ENCODE measurements at regions of chr2 and their contacts with region 1.

Region 1: GRCh38 chr2:85813982-85814801 is 60.4 kb downstream of the ATOH8 start:
- DNase-seq: peak; percentile 92
- ATAC-seq: peak; percentile 97
- H3K4me3 Mint-ChIP-seq: no peak overlapping the region
- H3K27ac Mint-ChIP-seq: no peak overlapping the region
- H3K4me1 Mint-ChIP-seq: no peaks in the 10 kb centered on the region
- H3K27me3 Mint-ChIP-seq: peaks cover 3% of the 10 kb centered on the region

Region 2: GRCh38 chr2:85635636-85636035 is 178.6 kb before region 1 on chr2:
- CTCF ChIA-PET with region 1: interaction called, 5 read pairs
- POLR2A ChIA-PET with region 1: no interaction called
- intact Hi-C with region 1: loop called in 1 of 2 experiments (anchors 2 kb)
- DNase-seq: no peak
- ATAC-seq: no peak
- H3K4me3 Mint-ChIP-seq: no peak overlapping the region
- H3K27ac Mint-ChIP-seq: no peak overlapping the region
- H3K4me1 Mint-ChIP-seq: peaks cover 10% of the 10 kb centered on the region
- H3K27me3 Mint-ChIP-seq: no peaks in the 10 kb centered on the region

Region 3: GRCh38 chr2:85678794-85679672 is 135.2 kb before region 1 on chr2:
- CTCF ChIA-PET with region 1: interaction called, 4 read pairs
- POLR2A ChIA-PET with region 1: no interaction called
- intact Hi-C with region 1: loop called (anchors 1 to 5 kb)
- DNase-seq: peak; percentile 85
- ATAC-seq: peak; percentile 96
- H3K4me3 Mint-ChIP-seq: no peak overlapping the region
- H3K27ac Mint-ChIP-seq: no peak overlapping the region
- H3K4me1 Mint-ChIP-seq: no peaks in the 10 kb centered on the region
- H3K27me3 Mint-ChIP-seq: peaks cover 2% of the 10 kb centered on the region

Region 4: DNA sequence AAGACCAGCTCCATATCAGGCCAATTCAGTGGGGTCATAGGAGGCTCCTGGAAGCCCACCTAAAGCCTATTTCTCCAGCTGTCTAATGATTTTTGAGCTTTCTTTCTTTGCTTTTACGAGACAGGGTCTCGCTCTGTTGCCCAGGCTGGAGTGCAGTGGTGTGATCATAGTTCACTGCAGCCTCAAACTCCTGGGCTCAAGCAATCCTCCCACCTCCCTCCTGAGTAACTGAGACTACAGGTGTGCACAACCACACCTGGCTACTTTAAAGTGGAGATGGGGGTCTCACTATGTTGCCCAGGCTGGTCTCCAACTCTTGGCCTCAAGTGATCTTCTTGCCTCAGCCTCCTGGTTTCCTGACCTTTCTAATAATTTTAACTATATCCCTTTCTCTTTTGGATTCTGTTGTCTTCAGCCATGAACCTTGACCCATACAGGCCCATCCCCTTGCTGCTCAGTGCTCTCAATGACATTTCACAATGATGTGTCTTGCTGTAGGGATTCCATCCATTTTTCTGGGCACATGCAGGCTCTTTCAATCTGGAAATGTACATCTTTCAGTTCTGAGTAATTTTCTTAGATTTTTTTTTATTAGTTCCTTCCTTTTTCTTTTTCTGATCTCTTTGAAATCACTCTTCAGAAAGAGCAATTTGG is 90.4 kb before region 1 on chr2:
- CTCF ChIA-PET with region 1: interaction called, 51 read pairs
- POLR2A ChIA-PET with region 1: no interaction called
- intact Hi-C with region 1: loop called (anchors 1 kb)
- DNase-seq: no peak
- ATAC-seq: no peak
- H3K4me3 Mint-ChIP-seq: no peak overlapping the region
- H3K27ac Mint-ChIP-seq: no peak overlapping the region
- H3K4me1 Mint-ChIP-seq: no peaks in the 10 kb centered on the region
- H3K27me3 Mint-ChIP-seq: peaks cover 7% of the 10 kb centered on the region

Region 5: DNA sequence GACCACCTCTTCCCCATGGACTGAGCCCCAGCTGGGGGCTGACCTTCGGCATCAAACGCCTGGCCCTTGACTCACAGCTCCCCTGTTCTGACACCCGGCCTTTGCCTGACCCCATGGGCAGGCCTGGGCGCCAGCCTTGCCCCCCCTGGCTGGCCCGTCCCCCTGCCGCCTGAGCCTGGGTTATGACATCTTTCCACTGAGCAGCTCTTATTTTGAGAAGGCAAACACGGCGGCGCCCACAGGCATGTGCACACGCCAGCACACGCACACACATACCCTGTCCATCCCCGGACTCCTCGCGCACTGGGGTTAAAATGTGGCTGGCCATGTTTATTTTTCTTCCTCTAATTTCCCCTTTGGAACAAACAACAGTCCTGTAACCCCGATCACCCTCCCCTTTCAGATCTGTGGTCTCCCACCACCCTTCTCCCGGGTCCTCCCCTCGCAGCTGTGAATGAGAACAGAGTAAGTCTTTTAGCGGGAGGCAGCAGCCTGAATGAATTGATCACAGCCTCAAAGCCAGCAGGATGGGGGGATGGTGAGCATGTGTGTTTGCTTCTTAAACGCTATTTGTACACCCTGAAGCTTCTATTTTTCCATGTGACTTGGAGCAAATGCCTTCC is 72.2 kb before region 1 on chr2:
- CTCF ChIA-PET with region 1: interaction called, 12 read pairs
- POLR2A ChIA-PET with region 1: no interaction called
- intact Hi-C with region 1: no loop called
- DNase-seq: no peak
- ATAC-seq: no peak
- H3K4me3 Mint-ChIP-seq: no peak overlapping the region
- H3K27ac Mint-ChIP-seq: no peak overlapping the region
- H3K4me1 Mint-ChIP-seq: no peaks in the 10 kb centered on the region
- H3K27me3 Mint-ChIP-seq: peaks cover 26% of the 10 kb centered on the region

Region 6: DNA sequence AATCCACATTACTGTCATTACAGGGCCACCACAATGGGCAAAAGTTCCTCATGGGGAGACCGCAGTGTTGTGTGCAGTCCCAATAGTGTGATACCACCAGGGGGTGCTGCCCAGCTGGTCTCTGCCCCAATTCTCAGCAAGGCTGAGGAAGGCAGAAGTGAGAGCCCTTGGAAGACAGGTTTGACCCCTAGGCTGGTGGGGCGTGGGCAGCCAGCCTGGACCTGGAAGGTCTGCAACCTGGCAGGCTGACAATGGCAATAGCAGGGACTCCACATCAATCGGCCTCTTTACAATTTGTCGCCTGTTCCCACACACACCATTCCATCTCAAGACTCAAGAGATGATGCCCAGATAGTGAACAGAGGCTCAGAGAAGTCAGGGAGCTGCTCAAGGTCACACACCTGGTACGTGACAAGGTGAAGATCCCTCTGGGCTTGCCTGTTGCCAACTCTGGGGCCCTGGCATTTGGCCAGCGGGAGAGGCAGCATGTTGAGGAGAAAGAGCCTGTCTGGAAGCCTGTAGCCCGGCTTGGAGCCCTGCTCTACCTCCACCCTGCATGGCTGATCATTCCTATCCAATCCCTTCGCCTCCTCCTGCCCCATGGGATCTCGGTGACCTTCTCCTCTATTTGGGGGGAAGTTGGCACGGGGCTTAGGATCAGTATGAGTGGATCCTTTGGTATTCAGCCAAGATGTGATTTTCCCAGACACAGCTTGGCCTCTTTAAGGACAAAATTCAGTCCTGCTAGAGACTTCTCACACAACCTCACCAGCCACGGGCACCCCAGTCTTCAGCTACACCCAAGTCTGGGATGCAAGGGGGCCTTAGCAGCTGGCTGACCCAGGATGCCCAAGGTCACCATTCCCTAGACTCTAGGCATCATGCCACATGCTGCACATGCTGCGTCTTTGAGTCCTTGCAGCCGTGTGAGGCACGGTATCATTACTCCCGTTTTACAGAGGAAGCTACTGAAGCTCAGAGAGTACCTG is 63.3 kb before region 1 on chr2:
- CTCF ChIA-PET with region 1: interaction called, 72 read pairs
- POLR2A ChIA-PET with region 1: no interaction called
- intact Hi-C with region 1: loop called (anchors 1 kb)
- DNase-seq: peak; percentile 77
- ATAC-seq: peak; percentile 66
- H3K4me3 Mint-ChIP-seq: no peak overlapping the region
- H3K27ac Mint-ChIP-seq: no peak overlapping the region
- H3K4me1 Mint-ChIP-seq: peaks cover 13% of the 10 kb centered on the region
- H3K27me3 Mint-ChIP-seq: peaks cover 45% of the 10 kb centered on the region

Region 7: DNA sequence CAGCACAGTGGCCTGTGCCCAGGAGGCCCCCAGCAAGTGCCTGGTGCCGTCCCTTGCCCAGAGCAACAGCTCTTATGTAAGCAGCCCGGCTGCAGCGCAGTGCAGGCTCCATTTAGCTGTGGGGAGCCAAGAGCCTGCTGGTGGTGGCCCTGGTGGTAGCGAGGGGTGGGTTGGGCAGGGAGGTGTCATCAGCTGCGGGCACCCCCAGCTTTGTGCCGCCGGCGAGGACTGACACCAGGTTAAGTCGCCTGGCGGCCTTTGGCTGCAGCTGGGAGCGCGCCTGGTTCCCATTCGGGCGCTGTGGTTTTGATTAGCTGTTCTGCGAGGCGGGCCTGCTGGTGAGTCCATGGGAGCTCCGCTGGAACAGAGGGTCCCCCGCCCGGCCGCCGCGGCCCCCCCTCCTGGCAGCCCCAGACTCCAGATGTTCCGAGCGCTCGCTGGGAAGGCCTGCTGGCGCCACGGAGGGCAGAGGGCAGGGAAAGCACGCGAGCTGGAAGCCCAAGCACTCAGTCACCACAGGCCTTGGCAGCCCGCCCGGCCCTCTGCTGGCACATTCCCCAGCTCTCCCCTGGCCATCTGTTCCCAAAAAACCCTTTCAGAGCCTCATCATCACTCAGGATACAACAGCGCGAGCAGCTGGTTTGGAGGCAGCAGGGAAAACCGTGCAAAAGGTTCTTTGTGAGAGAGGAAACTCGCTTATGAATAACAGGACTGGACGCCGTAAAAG is 42.0 kb before region 1 on chr2:
- CTCF ChIA-PET with region 1: interaction called, 13 read pairs
- POLR2A ChIA-PET with region 1: no interaction called
- intact Hi-C with region 1: no loop called
- DNase-seq: no peak
- ATAC-seq: no peak
- H3K4me3 Mint-ChIP-seq: no peak overlapping the region
- H3K27ac Mint-ChIP-seq: no peak overlapping the region
- H3K4me1 Mint-ChIP-seq: no peaks in the 10 kb centered on the region
- H3K27me3 Mint-ChIP-seq: peaks cover 18% of the 10 kb centered on the region